Astrocyte of the cerebellum (primary cell): ENCODE measurements at regions of chr16 and their contacts with region 1.

Region 1: DNA sequence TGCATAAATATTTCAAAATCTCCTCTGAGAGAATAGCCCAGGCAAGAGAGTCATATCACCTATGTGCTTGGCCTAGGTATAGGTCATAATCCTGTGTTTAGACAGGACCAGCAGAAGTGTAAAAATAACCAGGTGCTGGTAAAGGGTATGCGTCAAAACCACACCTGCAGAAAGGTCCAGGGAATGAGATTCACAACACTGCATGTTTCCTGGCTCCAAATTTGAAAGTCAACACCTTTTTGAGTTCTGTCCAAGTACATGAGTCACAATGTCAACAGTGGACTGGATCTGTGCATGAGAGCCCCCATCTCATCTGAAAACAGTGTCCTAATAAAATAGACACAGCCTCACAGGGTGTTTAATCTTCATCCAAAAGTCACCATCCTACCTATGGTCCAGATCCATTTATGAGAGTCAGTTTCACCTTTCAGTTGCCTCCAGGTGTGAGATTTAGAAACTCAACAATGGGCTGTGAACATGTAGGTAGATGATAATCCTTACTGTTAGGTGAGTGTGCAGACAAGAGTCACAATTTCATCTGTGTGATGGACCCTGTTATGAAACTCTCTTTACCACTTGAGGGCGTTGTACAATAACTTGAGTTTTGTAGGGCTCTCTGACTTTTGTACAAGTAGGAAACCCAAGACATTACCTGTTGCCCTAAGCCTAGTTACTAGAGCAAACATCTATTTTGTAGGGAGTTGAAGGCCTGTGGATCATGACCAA is 2100.7 kb downstream of the TP53TG3F start:
- DNase-seq: no peak
- H3K4me3 ChIP-seq: no peak overlapping the region
- CTCF ChIP-seq: no peak

Region 2: GRCh38 chr16:35449663-35450062 is 110.4 kb before region 1 on chr16:
- in situ Hi-C with region 1: loop called (anchors 25 kb)
- DNase-seq: no peak
- H3K4me3 ChIP-seq: no peak overlapping the region
- CTCF ChIP-seq: no peak